ENCODE measurements at regions of chr5 and their contacts with region 1.

Region 1: DNA sequence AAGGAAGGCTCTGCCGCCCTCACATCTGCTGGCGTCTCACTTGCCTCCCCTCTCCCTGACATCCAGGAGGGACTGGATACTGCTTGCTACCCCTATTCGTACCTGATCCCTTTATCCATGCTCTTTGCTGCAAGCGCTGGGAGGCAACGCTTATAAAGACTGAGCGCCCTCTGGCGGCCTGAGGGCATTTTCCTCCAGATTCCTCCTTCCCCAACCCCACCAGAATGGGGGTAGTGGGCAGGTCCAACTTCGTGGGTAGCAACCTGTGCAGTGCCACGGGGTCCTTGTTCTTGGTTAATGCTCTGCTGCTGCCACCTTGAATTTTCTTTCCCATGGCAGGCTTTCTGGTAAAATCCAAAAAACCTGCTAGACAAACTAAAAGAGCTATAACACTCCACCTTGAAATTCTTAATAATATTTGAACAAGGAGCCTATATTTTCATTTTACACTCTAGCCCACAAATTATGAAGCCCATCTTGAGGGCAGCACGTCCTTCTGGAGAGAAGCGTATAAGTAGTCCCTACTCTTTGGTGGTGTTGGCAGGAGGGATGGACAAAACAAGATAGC is 52.4 kb downstream of the JADE2 start:
- DNase-seq: peak; percentile 48
- H3K4me3 ChIP-seq: no peak overlapping the region
- H3K27ac ChIP-seq: no peak overlapping the region
- H3K4me1 ChIP-seq: peaks cover 10% of the 10 kb centered on the region
- H3K27me3 ChIP-seq: no peaks in the 10 kb centered on the region
- CTCF ChIP-seq: peak; percentile 84 to 87

Region 2: GRCh38 chr5:134296213-134296612 is 281.7 kb before region 1 on chr5:
- CTCF ChIA-PET with region 1: no interaction called
- dilution Hi-C with region 1: no loop called
- in situ Hi-C with region 1: loop called in 1 of 2 experiments (anchors 5 kb)
- intact Hi-C with region 1: no loop called
- DNase-seq: no peak
- H3K4me3 ChIP-seq: no peak overlapping the region
- H3K27ac ChIP-seq: no peak overlapping the region
- H3K4me1 ChIP-seq: no peaks in the 10 kb centered on the region
- H3K27me3 ChIP-seq: no peaks in the 10 kb centered on the region
- CTCF ChIP-seq: no peak

Region 3: GRCh38 chr5:134304311-134304710 is 273.6 kb before region 1 on chr5:
- CTCF ChIA-PET with region 1: no interaction called
- dilution Hi-C with region 1: no loop called
- in situ Hi-C with region 1: loop called (anchors 5 kb)
- intact Hi-C with region 1: loop called (anchors 1 kb)
- DNase-seq: no peak
- H3K4me3 ChIP-seq: no peak overlapping the region
- H3K27ac ChIP-seq: no peak overlapping the region
- H3K4me1 ChIP-seq: no peaks in the 10 kb centered on the region
- H3K27me3 ChIP-seq: no peaks in the 10 kb centered on the region
- CTCF ChIP-seq: no peak

Region 4: GRCh38 chr5:134370871-134371833 is 206.7 kb before region 1 on chr5 and contains the start of gene UBE2B:
- CTCF ChIA-PET with region 1: no interaction called
- dilution Hi-C with region 1: no loop called
- in situ Hi-C with region 1: no loop called
- intact Hi-C with region 1: loop called (anchors 2 kb)
- DNase-seq: peak; percentile 99
- H3K4me3 ChIP-seq: peak within 1 kb of the TSS; percentile 94 to 97 (median 95)
- H3K27ac ChIP-seq: peak within 1 kb of the TSS; percentile 89
- H3K4me1 ChIP-seq: peaks cover 9% of the 10 kb centered on the region
- H3K27me3 ChIP-seq: no peaks in the 10 kb centered on the region
- CTCF ChIP-seq: no peak
- total RNA-seq, gene UBE2B: 37.2 to 83.3 TPM

Region 5: DNA sequence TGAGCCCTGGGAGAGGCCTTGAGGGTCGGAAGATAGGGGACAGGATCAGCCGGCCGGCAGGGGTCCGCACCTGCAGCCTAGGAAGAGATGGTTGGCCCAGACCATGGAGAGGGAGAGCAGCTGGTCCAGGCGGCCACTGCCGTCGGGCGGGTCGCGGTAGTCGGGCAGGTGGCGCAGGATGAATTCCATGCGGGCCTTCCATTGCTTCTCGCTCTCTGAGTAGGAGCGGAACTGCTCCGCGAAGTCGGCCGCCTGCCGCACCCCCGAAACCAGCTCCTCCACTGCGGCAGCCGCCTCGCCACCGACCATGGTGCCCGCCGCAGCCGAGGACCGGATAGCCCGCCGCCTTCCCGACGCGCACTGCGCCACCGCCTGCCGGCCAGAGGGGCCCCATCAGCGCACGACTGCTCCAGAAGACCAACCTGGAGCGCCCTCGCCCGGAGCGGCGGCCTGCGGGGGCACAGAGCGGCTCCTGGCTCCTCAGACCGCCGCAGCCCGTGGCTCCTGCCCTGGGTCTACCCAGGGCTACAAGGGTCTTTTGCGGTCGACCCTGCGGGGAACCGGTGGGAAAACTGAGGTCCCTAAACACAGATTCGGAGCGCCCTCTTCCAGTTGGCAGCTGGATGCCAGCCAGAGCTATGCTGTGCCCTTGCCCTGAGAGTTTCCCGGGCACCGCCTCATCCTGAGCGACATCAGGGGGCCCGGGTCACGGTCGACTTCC is 166.2 kb before region 1 on chr5 and contains the start of gene CDKN2AIPNL:
- CTCF ChIA-PET with region 1: no interaction called
- dilution Hi-C with region 1: no loop called
- in situ Hi-C with region 1: no loop called
- intact Hi-C with region 1: loop called (anchors 1 kb)
- DNase-seq: peak; percentile 81
- H3K4me3 ChIP-seq: peak within 1 kb of the TSS; percentile 85 to 91 (median 87)
- H3K27ac ChIP-seq: peak within 1 kb of the TSS; percentile 28
- H3K4me1 ChIP-seq: peaks cover 22% of the 10 kb centered on the region
- H3K27me3 ChIP-seq: no peaks in the 10 kb centered on the region
- CTCF ChIP-seq: peak; percentile 35 to 77
- total RNA-seq, gene CDKN2AIPNL: 28.7 to 30.0 TPM

Region 6: GRCh38 chr5:134873987-134874830 is 296.3 kb after region 1 on chr5 and contains the start of gene TXNDC15:
- CTCF ChIA-PET with region 1: no interaction called
- dilution Hi-C with region 1: no loop called
- in situ Hi-C with region 1: no loop called
- intact Hi-C with region 1: no loop called
- DNase-seq: peak; percentile 81
- H3K4me3 ChIP-seq: peak within 1 kb of the TSS; percentile 63 to 96 (median 68)
- H3K27ac ChIP-seq: peak within 1 kb of the TSS; percentile 75
- H3K4me1 ChIP-seq: peaks cover 13% of the 10 kb centered on the region
- H3K27me3 ChIP-seq: no peaks in the 10 kb centered on the region
- CTCF ChIP-seq: no peak
- total RNA-seq, gene TXNDC15: 30.4 to 43.0 TPM

Measured in mammary epithelial cell (primary cell).